Left ventricle myocardium inferior (tissue), 1 donor: ENCODE measurements at regions of chr11 and their contacts with region 1.

Region 1: GRCh38 chr11:44911029-44911814 is 39.5 kb downstream of the TP53I11 start:
- DNase-seq: peak; percentile 76
- H3K4me3 ChIP-seq: no peak overlapping the region
- H3K27ac ChIP-seq: peak overlapping the region; percentile 58
- H3K4me1 ChIP-seq: peaks cover 60% of the 10 kb centered on the region
- H3K27me3 ChIP-seq: no peaks in the 10 kb centered on the region
- CTCF ChIP-seq: peak; percentile 90

Region 2: GRCh38 chr11:44621140-44621681 is 290.0 kb before region 1 on chr11:
- intact Hi-C with region 1: loop called (anchors 5 kb)
- DNase-seq: peak; percentile 80
- H3K4me3 ChIP-seq: peak overlapping the region; percentile 48
- H3K27ac ChIP-seq: no peak overlapping the region
- H3K4me1 ChIP-seq: peaks cover 54% of the 10 kb centered on the region
- H3K27me3 ChIP-seq: no peaks in the 10 kb centered on the region
- CTCF ChIP-seq: peak; percentile 98